ENCODE measurements at regions of chr7 and their contacts with region 1.

Region 1: GRCh38 chr7:131040467-131040932 is 287.2 kb upstream of the MKLN1 start:
- DNase-seq: peak; percentile 80
- H3K4me3 ChIP-seq: no peak overlapping the region; a peak in 1 of 4 replicates
- H3K27ac ChIP-seq: peak overlapping the region; percentile 0 to 66; a peak in 2 of 4 replicates
- H3K4me1 ChIP-seq: peaks cover 4 to 16% of the 10 kb centered on the region in 2 experiments; a peak in 3 of 4 replicates
- H3K27me3 ChIP-seq: no peaks in the 10 kb centered on the region
- CTCF ChIP-seq: peak; percentile 100
- EP300 ChIP-seq: no peak
- RAD21 ChIP-seq: peak; percentile 97

Region 2: DNA sequence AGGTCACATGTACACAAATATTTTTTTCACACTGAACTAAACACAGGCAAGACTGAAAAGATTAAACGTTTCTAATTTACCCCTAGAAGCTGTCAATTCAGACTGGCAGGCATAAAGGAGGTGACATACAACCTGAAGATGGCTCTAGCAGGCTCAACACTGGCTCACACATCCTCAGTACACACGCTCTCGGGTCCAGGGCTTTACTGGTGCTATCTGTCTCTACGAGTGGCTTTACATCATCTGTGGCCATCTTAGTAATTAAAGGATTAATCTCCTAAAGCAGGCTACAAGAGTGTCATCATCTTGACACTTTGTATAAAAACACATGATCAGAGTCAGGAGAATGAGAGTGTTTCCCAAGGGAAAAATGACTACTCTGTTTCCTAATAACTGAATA is 429.3 kb before region 1 on chr7:
- CTCF ChIA-PET with region 1: no interaction called
- POLR2A ChIA-PET with region 1: no interaction called
- DNase-seq: no peak
- H3K4me3 ChIP-seq: no peak overlapping the region
- H3K27ac ChIP-seq: no peak overlapping the region
- H3K4me1 ChIP-seq: no peaks in the 10 kb centered on the region
- H3K27me3 ChIP-seq: no peaks in the 10 kb centered on the region
- CTCF ChIP-seq: no peak
- EP300 ChIP-seq: no peak
- RAD21 ChIP-seq: no peak

Region 3: DNA sequence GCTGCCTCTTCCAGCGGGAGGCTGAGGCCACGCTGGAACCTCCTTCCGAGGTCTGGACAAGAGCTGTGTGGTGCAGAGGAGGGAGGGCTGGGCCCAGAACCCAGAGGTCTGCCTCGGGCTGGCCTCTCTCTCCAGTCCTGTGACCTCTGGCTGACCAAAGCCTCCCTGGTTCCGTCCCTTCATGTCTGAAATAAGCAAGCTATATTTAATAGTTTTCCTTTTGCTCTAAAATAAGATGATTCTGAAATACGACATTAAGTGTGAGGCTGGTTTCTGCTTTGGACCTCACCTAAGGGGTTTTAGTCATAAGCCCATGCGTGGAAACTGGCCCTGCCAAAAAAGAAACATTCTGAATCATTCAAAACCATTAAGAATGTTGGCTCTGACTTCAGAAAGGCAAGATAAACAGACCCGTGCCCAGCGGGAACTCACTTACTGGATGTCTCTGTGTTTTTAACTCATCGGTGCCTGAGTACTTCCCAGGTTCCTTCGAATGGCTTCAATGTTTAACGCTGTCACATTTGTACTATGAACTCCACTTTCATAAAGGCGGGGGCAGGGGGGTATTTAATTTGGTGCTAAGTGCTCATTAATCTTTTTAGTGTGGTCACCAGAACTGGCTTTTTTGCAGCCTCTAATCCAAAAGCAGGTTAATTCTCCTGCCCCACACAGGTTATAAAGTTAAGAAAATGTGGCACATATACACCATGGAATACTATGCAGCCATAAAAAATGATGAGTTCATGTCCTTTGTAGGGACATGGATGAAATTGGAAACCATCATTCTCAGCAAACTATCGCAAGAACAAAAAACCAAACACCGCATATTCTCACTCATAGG is 149.0 kb before region 1 on chr7:
- CTCF ChIA-PET with region 1: interaction called, 186 read pairs
- POLR2A ChIA-PET with region 1: no interaction called
- DNase-seq: no peak
- H3K4me3 ChIP-seq: peak overlapping the region in 1 of 2 experiments; percentile 17; a peak in 2 of 4 replicates
- H3K27ac ChIP-seq: peak overlapping the region; percentile 82 to 100
- H3K4me1 ChIP-seq: peaks cover 17 to 81% of the 10 kb centered on the region in 2 experiments
- H3K27me3 ChIP-seq: no peaks in the 10 kb centered on the region
- CTCF ChIP-seq: no peak
- EP300 ChIP-seq: peak in 1 of 2 experiments; percentile 83; a peak in 2 of 4 replicates
- RAD21 ChIP-seq: no peak

Region 4: GRCh38 chr7:130961128-130961601 is 79.3 kb before region 1 on chr7:
- CTCF ChIA-PET with region 1: interaction called, 11 read pairs
- POLR2A ChIA-PET with region 1: no interaction called
- DNase-seq: no peak
- H3K4me3 ChIP-seq: peak overlapping the region; percentile 43 to 57; a peak in 3 of 4 replicates
- H3K27ac ChIP-seq: peak overlapping the region; percentile 92 to 100
- H3K4me1 ChIP-seq: peaks cover 4 to 50% of the 10 kb centered on the region in 2 experiments
- H3K27me3 ChIP-seq: no peaks in the 10 kb centered on the region
- CTCF ChIP-seq: no peak
- EP300 ChIP-seq: no peak
- RAD21 ChIP-seq: no peak

Region 5: GRCh38 chr7:130996841-130997231 is 43.7 kb before region 1 on chr7:
- CTCF ChIA-PET with region 1: interaction called, 20 read pairs
- POLR2A ChIA-PET with region 1: no interaction called
- DNase-seq: no peak
- H3K4me3 ChIP-seq: no peak overlapping the region
- H3K27ac ChIP-seq: peak overlapping the region in 1 of 2 experiments; percentile 51; a peak in 2 of 4 replicates
- H3K4me1 ChIP-seq: peaks cover 5 to 31% of the 10 kb centered on the region in 2 experiments; a peak in 3 of 4 replicates
- H3K27me3 ChIP-seq: no peaks in the 10 kb centered on the region
- CTCF ChIP-seq: no peak
- EP300 ChIP-seq: no peak
- RAD21 ChIP-seq: no peak

Region 6: GRCh38 chr7:131027287-131027773 is 13.2 kb before region 1 on chr7:
- CTCF ChIA-PET with region 1: interaction called, 46 read pairs
- POLR2A ChIA-PET with region 1: no interaction called
- DNase-seq: peak; percentile 65
- H3K4me3 ChIP-seq: no peak overlapping the region
- H3K27ac ChIP-seq: peak overlapping the region; percentile 13 to 46
- H3K4me1 ChIP-seq: peaks cover 9 to 20% of the 10 kb centered on the region in 2 experiments; a peak in 3 of 4 replicates
- H3K27me3 ChIP-seq: no peaks in the 10 kb centered on the region
- CTCF ChIP-seq: peak; percentile 15; the same call in 1 of the 2 replicates
- EP300 ChIP-seq: no peak; a peak in 1 of 4 replicates
- RAD21 ChIP-seq: no peak

Region 7: DNA sequence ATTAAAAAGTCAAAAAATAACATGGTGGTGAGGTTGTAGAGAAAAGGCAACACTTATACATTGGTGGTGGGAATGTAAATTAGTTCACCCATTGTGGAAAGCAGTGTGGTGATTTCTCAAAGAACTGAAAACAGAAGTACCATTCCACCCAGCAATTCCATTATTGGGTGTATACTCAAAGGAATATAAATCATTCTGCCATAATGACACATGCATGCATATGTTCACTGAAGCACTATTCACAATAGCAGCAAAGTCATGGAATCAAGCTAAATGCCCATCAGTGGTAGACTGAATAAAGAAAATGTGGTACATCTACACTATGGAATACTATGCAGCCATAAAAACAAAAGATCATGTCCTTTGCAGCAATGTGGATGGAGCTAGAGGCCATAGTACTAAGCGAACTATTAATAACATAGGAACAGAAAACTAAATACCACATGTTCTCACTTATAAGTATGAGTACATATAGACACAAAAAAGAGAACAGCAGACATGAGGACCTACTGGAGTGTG is 221.0 kb after region 1 on chr7:
- CTCF ChIA-PET with region 1: no interaction called
- POLR2A ChIA-PET with region 1: no interaction called
- DNase-seq: no peak
- H3K4me3 ChIP-seq: no peak overlapping the region
- H3K27ac ChIP-seq: no peak overlapping the region
- H3K4me1 ChIP-seq: no peaks in the 10 kb centered on the region
- H3K27me3 ChIP-seq: no peaks in the 10 kb centered on the region
- CTCF ChIP-seq: no peak
- EP300 ChIP-seq: no peak
- RAD21 ChIP-seq: no peak

Measured in SK-N-SH (cell line).